ENCODE measurements at regions of chr18 and their contacts with region 1.

Region 1: GRCh38 chr18:61998957-61999356 is 106.2 kb upstream of the RNF152 start:
- DNase-seq: no peak
- ATAC-seq: no peak
- H3K4me3 ChIP-seq: no peak overlapping the region
- H3K4me3 Mint-ChIP-seq: no peak overlapping the region
- H3K27ac ChIP-seq: no peak overlapping the region
- H3K27ac Mint-ChIP-seq: no peak overlapping the region
- H3K4me1 ChIP-seq: no peaks in the 10 kb centered on the region
- H3K4me1 Mint-ChIP-seq: no peaks in the 10 kb centered on the region
- H3K27me3 ChIP-seq: no peaks in the 10 kb centered on the region
- H3K27me3 Mint-ChIP-seq: peaks cover 3% of the 10 kb centered on the region
- CTCF ChIP-seq: no peak

Region 2: GRCh38 chr18:61371111-61371510 is 627.8 kb before region 1 on chr18:
- CTCF ChIA-PET with region 1: no interaction called
- POLR2A ChIA-PET with region 1: no interaction called
- intact Hi-C with region 1: no loop called
- DNase-seq: no peak
- ATAC-seq: no peak
- H3K4me3 ChIP-seq: no peak overlapping the region
- H3K4me3 Mint-ChIP-seq: no peak overlapping the region
- H3K27ac ChIP-seq: no peak overlapping the region
- H3K27ac Mint-ChIP-seq: no peak overlapping the region
- H3K4me1 ChIP-seq: no peaks in the 10 kb centered on the region
- H3K4me1 Mint-ChIP-seq: no peaks in the 10 kb centered on the region
- H3K27me3 ChIP-seq: no peaks in the 10 kb centered on the region
- H3K27me3 Mint-ChIP-seq: no peaks in the 10 kb centered on the region
- CTCF ChIP-seq: no peak

Region 3: GRCh38 chr18:61984349-61984748 is 14.6 kb before region 1 on chr18:
- CTCF ChIA-PET with region 1: no interaction called
- POLR2A ChIA-PET with region 1: no interaction called
- intact Hi-C with region 1: loop called in 1 of 2 experiments (anchors 2 kb)
- DNase-seq: no peak
- ATAC-seq: no peak
- H3K4me3 ChIP-seq: no peak overlapping the region
- H3K4me3 Mint-ChIP-seq: no peak overlapping the region
- H3K27ac ChIP-seq: no peak overlapping the region
- H3K27ac Mint-ChIP-seq: no peak overlapping the region
- H3K4me1 ChIP-seq: no peaks in the 10 kb centered on the region
- H3K4me1 Mint-ChIP-seq: no peaks in the 10 kb centered on the region
- H3K27me3 ChIP-seq: no peaks in the 10 kb centered on the region
- H3K27me3 Mint-ChIP-seq: peaks cover 8% of the 10 kb centered on the region
- CTCF ChIP-seq: no peak

Region 4: GRCh38 chr18:62118328-62118727 is 119.4 kb after region 1 on chr18:
- CTCF ChIA-PET with region 1: no interaction called
- POLR2A ChIA-PET with region 1: no interaction called
- intact Hi-C with region 1: no loop called
- DNase-seq: no peak
- ATAC-seq: no peak
- H3K4me3 ChIP-seq: no peak overlapping the region
- H3K4me3 Mint-ChIP-seq: no peak overlapping the region
- H3K27ac ChIP-seq: no peak overlapping the region
- H3K27ac Mint-ChIP-seq: no peak overlapping the region
- H3K4me1 ChIP-seq: no peaks in the 10 kb centered on the region
- H3K4me1 Mint-ChIP-seq: no peaks in the 10 kb centered on the region
- H3K27me3 ChIP-seq: no peaks in the 10 kb centered on the region
- H3K27me3 Mint-ChIP-seq: no peaks in the 10 kb centered on the region
- CTCF ChIP-seq: no peak

Region 5: GRCh38 chr18:62152844-62153243 is 153.9 kb after region 1 on chr18:
- CTCF ChIA-PET with region 1: no interaction called
- POLR2A ChIA-PET with region 1: no interaction called
- intact Hi-C with region 1: no loop called
- DNase-seq: no peak
- ATAC-seq: no peak
- H3K4me3 ChIP-seq: no peak overlapping the region
- H3K4me3 Mint-ChIP-seq: no peak overlapping the region
- H3K27ac ChIP-seq: no peak overlapping the region
- H3K27ac Mint-ChIP-seq: no peak overlapping the region
- H3K4me1 ChIP-seq: no peaks in the 10 kb centered on the region
- H3K4me1 Mint-ChIP-seq: no peaks in the 10 kb centered on the region
- H3K27me3 ChIP-seq: no peaks in the 10 kb centered on the region
- H3K27me3 Mint-ChIP-seq: no peaks in the 10 kb centered on the region
- CTCF ChIP-seq: no peak

Measured in CD8-positive, alpha-beta T cell (primary cell).